Activated CD4-positive, alpha-beta memory T cell treated with anti-CD3 and anti-CD28 coated beads for 36 hours (primary cell): ENCODE measurements at regions of chr3 and their contacts with region 1.

Region 1: DNA sequence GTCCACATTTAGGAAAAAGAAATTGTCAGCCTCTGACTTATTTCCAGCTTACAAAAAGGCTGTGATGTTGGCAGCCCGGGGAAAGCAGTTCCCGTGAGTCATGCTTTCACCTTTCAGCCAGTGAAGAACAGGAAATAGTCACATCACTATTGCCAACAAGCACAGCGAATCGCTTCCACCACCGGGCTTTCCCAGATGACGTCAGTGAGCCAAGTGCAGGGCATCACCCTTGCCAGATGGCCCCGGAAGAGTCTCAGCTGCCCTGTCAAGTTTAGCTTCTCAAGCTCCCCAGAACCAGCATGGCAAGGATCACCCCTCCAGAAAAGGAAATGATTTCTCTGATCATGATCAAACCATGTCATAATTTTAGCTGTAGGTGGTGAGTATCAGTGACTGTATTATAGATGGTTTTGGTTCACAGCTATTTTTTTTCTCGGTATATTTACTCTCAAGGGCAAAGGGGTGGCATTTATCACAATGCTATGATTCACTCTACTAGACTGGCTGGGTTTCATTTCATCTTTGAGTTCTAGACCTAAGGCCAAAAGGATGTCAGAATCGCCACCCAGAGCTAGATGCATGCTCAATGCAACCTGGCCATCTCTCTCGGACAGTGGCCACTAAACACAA is 32.9 kb downstream of the B3GNT5 start:
- DNase-seq: peak; percentile 97
- H3K4me3 Mint-ChIP-seq: peak overlapping the region; percentile 71
- H3K27ac Mint-ChIP-seq: peak overlapping the region; percentile 98
- H3K4me1 Mint-ChIP-seq: peaks cover 39% of the 10 kb centered on the region
- H3K27me3 Mint-ChIP-seq: no peaks in the 10 kb centered on the region

Region 2: GRCh38 chr3:183158551-183159006 is 127.4 kb before region 1 on chr3:
- CTCF ChIA-PET with region 1: no interaction called
- POLR2A ChIA-PET with region 1: no interaction called
- intact Hi-C with region 1: loop called (anchors 1 kb)
- DNase-seq: peak; percentile 67
- H3K4me3 Mint-ChIP-seq: no peak overlapping the region
- H3K27ac Mint-ChIP-seq: peak overlapping the region; percentile 26
- H3K4me1 Mint-ChIP-seq: peaks cover 27% of the 10 kb centered on the region
- H3K27me3 Mint-ChIP-seq: peaks cover 3% of the 10 kb centered on the region

Region 3: DNA sequence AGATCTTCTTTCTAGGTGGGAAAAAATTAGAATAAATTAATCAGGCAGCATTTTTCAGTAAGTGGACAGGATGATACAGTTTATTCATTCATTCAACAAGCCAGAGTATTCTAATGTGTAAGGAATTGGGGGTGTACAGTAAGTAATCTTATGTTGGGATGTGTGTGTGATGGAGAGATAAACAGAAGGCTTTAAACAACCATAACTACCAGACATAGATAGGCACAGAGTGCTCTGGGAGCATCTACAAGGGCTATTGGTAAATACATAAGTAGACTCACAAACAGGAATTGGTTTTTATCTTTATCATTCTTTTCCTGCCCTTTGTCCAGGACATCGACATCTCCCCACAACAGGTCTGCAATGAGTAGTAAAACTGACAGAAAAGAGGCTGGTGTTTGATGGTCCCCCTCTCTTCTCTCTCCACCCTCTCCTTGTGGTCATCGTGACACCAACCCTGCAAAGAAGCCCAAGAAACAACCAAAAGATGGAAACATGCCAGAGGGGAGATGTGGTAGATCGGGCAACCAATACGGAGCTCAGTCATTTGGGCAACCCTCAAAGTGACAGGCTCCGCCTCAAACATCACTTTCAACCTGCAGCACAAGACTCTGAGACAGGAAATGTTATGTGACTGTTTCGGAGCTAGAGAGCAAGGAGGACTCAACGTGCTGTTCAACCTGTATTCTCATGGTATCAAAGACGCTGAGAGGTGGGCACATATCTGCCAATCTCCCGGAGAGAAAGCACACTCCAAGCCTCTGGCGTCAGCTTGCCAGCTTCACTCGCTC is 61.6 kb before region 1 on chr3:
- CTCF ChIA-PET with region 1: interaction called, 3 read pairs
- POLR2A ChIA-PET with region 1: interaction called, 4 read pairs
- intact Hi-C with region 1: loop called (anchors 2 kb)
- DNase-seq: peak; percentile 66
- H3K4me3 Mint-ChIP-seq: peak overlapping the region; percentile 16
- H3K27ac Mint-ChIP-seq: no peak overlapping the region
- H3K4me1 Mint-ChIP-seq: peaks cover 23% of the 10 kb centered on the region
- H3K27me3 Mint-ChIP-seq: no peaks in the 10 kb centered on the region

Region 4: GRCh38 chr3:183306798-183307671 is 21.1 kb after region 1 on chr3:
- CTCF ChIA-PET with region 1: no interaction called
- POLR2A ChIA-PET with region 1: interaction called, 7 read pairs
- intact Hi-C with region 1: loop called (anchors 1 kb)
- DNase-seq: peak; percentile 65
- H3K4me3 Mint-ChIP-seq: no peak overlapping the region
- H3K27ac Mint-ChIP-seq: peak overlapping the region; percentile 44
- H3K4me1 Mint-ChIP-seq: peaks cover 12% of the 10 kb centered on the region
- H3K27me3 Mint-ChIP-seq: no peaks in the 10 kb centered on the region

Region 5: DNA sequence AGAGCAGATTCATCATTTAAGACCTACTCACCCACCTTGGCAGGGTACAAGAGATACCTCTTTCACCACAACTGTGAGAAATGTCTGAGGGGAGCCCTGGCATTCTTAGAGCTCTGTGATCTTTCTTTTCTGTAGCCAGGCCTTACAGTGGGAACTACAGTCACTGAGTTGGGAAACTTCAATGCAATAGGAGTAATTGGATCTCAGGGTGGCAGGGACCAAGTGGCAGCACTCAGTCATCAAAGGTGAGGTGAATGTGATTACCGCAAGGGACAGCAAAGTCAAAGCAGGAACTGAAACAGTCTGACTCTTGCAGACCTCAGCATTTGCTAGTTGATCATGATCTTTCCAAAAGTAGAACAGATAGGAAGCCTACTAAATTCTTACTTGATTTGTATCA is 149.7 kb after region 1 on chr3:
- CTCF ChIA-PET with region 1: no interaction called
- POLR2A ChIA-PET with region 1: interaction called, 9 read pairs
- intact Hi-C with region 1: loop called (anchors 2 kb)
- DNase-seq: peak; percentile 74
- H3K4me3 Mint-ChIP-seq: no peak overlapping the region
- H3K27ac Mint-ChIP-seq: peak overlapping the region; percentile 69
- H3K4me1 Mint-ChIP-seq: peaks cover 58% of the 10 kb centered on the region
- H3K27me3 Mint-ChIP-seq: no peaks in the 10 kb centered on the region

Region 6: GRCh38 chr3:183697610-183698317 is 411.8 kb after region 1 on chr3 and contains the start of gene YEATS2:
- CTCF ChIA-PET with region 1: no interaction called
- POLR2A ChIA-PET with region 1: no interaction called
- intact Hi-C with region 1: loop called (anchors 2 kb)
- DNase-seq: peak; percentile 88
- H3K4me3 Mint-ChIP-seq: peak within 1 kb of the TSS; percentile 82
- H3K27ac Mint-ChIP-seq: peak within 1 kb of the TSS; percentile 86
- H3K4me1 Mint-ChIP-seq: peaks cover 32% of the 10 kb centered on the region
- H3K27me3 Mint-ChIP-seq: no peaks in the 10 kb centered on the region
- total RNA-seq, gene YEATS2: 45.4 to 48.8 TPM

Region 7: GRCh38 chr3:184636741-184637316 is 1350.9 kb after region 1 on chr3:
- CTCF ChIA-PET with region 1: no interaction called
- POLR2A ChIA-PET with region 1: no interaction called
- intact Hi-C with region 1: no loop called
- DNase-seq: peak; percentile 76
- H3K4me3 Mint-ChIP-seq: no peak overlapping the region
- H3K27ac Mint-ChIP-seq: peak overlapping the region; percentile 53
- H3K4me1 Mint-ChIP-seq: peaks cover 3% of the 10 kb centered on the region
- H3K27me3 Mint-ChIP-seq: no peaks in the 10 kb centered on the region